ENCODE measurements at regions of chr11 and their contacts with region 1.

Region 1: GRCh38 chr11:118791111-118791965 is at the start of gene DDX6:
- DNase-seq: peak; percentile 87 to 93
- ATAC-seq: peak; percentile 63 to 83 (median 74)
- H3K4me3 ChIP-seq: peak within 1 kb of the TSS; percentile 79
- H3K4me3 Mint-ChIP-seq: peak within 1 kb of the TSS; percentile 98
- H3K27ac ChIP-seq: peak within 1 kb of the TSS; percentile 97
- H3K27ac Mint-ChIP-seq: peak within 1 kb of the TSS; percentile 99
- H3K4me1 ChIP-seq: peaks cover 40% of the 10 kb centered on the region
- H3K4me1 Mint-ChIP-seq: peaks cover 30 to 47% of the 10 kb centered on the region in 2 donors
- H3K27me3 ChIP-seq: no peaks in the 10 kb centered on the region
- H3K27me3 Mint-ChIP-seq: no peaks in the 10 kb centered on the region
- CTCF ChIP-seq: no peak
- total RNA-seq, gene DDX6: 350 to 369 (median 364) TPM

Region 2: GRCh38 chr11:117946842-117947526 is 844.4 kb before region 1 on chr11:
- intact Hi-C with region 1: no loop called
- DNase-seq: peak; percentile 82 to 90
- ATAC-seq: peak; percentile 58 to 70 (median 60)
- H3K4me3 ChIP-seq: no peak overlapping the region
- H3K4me3 Mint-ChIP-seq: peak overlapping the region; percentile 38
- H3K27ac ChIP-seq: no peak overlapping the region
- H3K27ac Mint-ChIP-seq: no peak overlapping the region
- H3K4me1 ChIP-seq: peaks cover 54% of the 10 kb centered on the region
- H3K4me1 Mint-ChIP-seq: peaks cover 43 to 56% of the 10 kb centered on the region in 2 donors
- H3K27me3 ChIP-seq: no peaks in the 10 kb centered on the region
- H3K27me3 Mint-ChIP-seq: peaks cover 2 to 10% of the 10 kb centered on the region in 2 donors
- CTCF ChIP-seq: peak; percentile 96

Region 3: GRCh38 chr11:118699506-118700220 is 91.7 kb before region 1 on chr11:
- intact Hi-C with region 1: loop called (anchors 2 kb)
- DNase-seq: peak; percentile 69 to 94
- ATAC-seq: peak; percentile 90 to 97 (median 91)
- H3K4me3 ChIP-seq: no peak overlapping the region
- H3K4me3 Mint-ChIP-seq: peak overlapping the region; percentile 78
- H3K27ac ChIP-seq: peak overlapping the region; percentile 81
- H3K27ac Mint-ChIP-seq: peak overlapping the region; percentile 88 to 94
- H3K4me1 ChIP-seq: peaks cover 59% of the 10 kb centered on the region
- H3K4me1 Mint-ChIP-seq: peaks cover 17 to 28% of the 10 kb centered on the region in 2 donors
- H3K27me3 ChIP-seq: no peaks in the 10 kb centered on the region
- H3K27me3 Mint-ChIP-seq: no peaks in the 10 kb centered on the region
- CTCF ChIP-seq: no peak

Region 4: GRCh38 chr11:118870396-118871345 is 79.3 kb after region 1 on chr11:
- intact Hi-C with region 1: loop called (anchors 1 kb)
- DNase-seq: peak in 1 of 2 donors; percentile 68
- ATAC-seq: peak; percentile 27 to 55 (median 36)
- H3K4me3 ChIP-seq: peak overlapping the region; percentile 37
- H3K4me3 Mint-ChIP-seq: peak overlapping the region; percentile 88
- H3K27ac ChIP-seq: peak overlapping the region; percentile 98
- H3K27ac Mint-ChIP-seq: peak overlapping the region; percentile 94 to 99
- H3K4me1 ChIP-seq: peaks cover 62% of the 10 kb centered on the region
- H3K4me1 Mint-ChIP-seq: peaks cover 35 to 45% of the 10 kb centered on the region in 2 donors
- H3K27me3 ChIP-seq: no peaks in the 10 kb centered on the region
- H3K27me3 Mint-ChIP-seq: no peaks in the 10 kb centered on the region
- CTCF ChIP-seq: no peak

Region 5: GRCh38 chr11:119874660-119875238 is 1083.4 kb after region 1 on chr11:
- intact Hi-C with region 1: no loop called
- DNase-seq: no peak
- ATAC-seq: no peak
- H3K4me3 ChIP-seq: no peak overlapping the region
- H3K4me3 Mint-ChIP-seq: no peak overlapping the region
- H3K27ac ChIP-seq: no peak overlapping the region
- H3K27ac Mint-ChIP-seq: no peak overlapping the region
- H3K4me1 ChIP-seq: no peaks in the 10 kb centered on the region
- H3K4me1 Mint-ChIP-seq: no peaks in the 10 kb centered on the region
- H3K27me3 ChIP-seq: peaks cover 3% of the 10 kb centered on the region
- H3K27me3 Mint-ChIP-seq: peaks cover 5 to 6% of the 10 kb centered on the region in 2 donors
- CTCF ChIP-seq: no peak

Measured in natural killer cell (primary cell).